ENCODE measurements at regions of chr20 and their contacts with region 1.

Region 1: DNA sequence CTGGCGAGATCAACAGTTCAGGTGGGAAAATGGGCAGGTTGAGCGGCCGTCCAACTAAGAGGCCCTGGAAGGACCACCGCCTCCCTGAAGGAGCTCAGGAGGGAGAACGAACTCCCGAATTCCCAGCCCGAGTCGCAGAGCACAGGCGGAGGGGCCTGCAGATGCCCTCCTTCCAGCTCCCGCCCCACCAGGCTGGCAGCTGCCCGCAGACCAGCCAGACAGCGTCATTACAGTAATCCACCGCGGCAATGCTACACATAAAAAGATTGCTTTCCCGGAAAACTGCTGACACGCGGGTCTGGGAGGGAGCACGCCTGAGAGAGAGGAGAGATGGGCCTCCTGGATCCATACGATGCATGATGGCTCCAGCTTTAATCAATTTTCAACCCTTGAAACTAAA is 30.5 kb upstream of the SLCO4A1 start:
- DNase-seq: no peak
- ATAC-seq: no peak
- H3K4me3 ChIP-seq: no peak overlapping the region
- H3K27ac ChIP-seq: no peak overlapping the region
- H3K4me1 ChIP-seq: peaks cover 0 to 27% of the 10 kb centered on the region in 2 experiments; a peak in 2 of 5 replicates
- H3K27me3 ChIP-seq: peaks cover 36 to 66% of the 10 kb centered on the region in 2 experiments
- CTCF ChIP-seq: no peak
- EP300 ChIP-seq: no peak
- POLR2A ChIP-seq: no peak
- RAD21 ChIP-seq: no peak

Region 2: GRCh38 chr20:62601172-62601571 is 10.6 kb before region 1 on chr20:
- CTCF ChIA-PET with region 1: no interaction called
- POLR2A ChIA-PET with region 1: interaction called, 11 read pairs
- in situ Hi-C with region 1: no loop called
- intact Hi-C with region 1: no loop called
- DNase-seq: no peak
- ATAC-seq: no peak
- H3K4me3 ChIP-seq: no peak overlapping the region
- H3K27ac ChIP-seq: no peak overlapping the region
- H3K4me1 ChIP-seq: peaks cover 16 to 44% of the 10 kb centered on the region in 2 experiments
- H3K27me3 ChIP-seq: peaks cover 44 to 80% of the 10 kb centered on the region in 2 experiments
- CTCF ChIP-seq: no peak
- EP300 ChIP-seq: no peak
- POLR2A ChIP-seq: no peak
- RAD21 ChIP-seq: no peak

Region 3: GRCh38 chr20:62668441-62669027 is 56.7 kb after region 1 on chr20:
- CTCF ChIA-PET with region 1: no interaction called
- POLR2A ChIA-PET with region 1: no interaction called
- in situ Hi-C with region 1: no loop called
- intact Hi-C with region 1: no loop called
- DNase-seq: peak; percentile 67 to 81 (median 75)
- ATAC-seq: peak; percentile 87
- H3K4me3 ChIP-seq: no peak overlapping the region
- H3K27ac ChIP-seq: no peak overlapping the region
- H3K4me1 ChIP-seq: peaks cover 0 to 42% of the 10 kb centered on the region in 2 experiments; a peak in 2 of 5 replicates
- H3K27me3 ChIP-seq: no peaks in the 10 kb centered on the region
- CTCF ChIP-seq: peak; percentile 88 to 95 (median 93)
- EP300 ChIP-seq: no peak
- POLR2A ChIP-seq: no peak
- RAD21 ChIP-seq: peak; percentile 89 to 95